K562 (cell line): ENCODE measurements at regions of chr19 and their contacts with region 1.

Region 1: DNA sequence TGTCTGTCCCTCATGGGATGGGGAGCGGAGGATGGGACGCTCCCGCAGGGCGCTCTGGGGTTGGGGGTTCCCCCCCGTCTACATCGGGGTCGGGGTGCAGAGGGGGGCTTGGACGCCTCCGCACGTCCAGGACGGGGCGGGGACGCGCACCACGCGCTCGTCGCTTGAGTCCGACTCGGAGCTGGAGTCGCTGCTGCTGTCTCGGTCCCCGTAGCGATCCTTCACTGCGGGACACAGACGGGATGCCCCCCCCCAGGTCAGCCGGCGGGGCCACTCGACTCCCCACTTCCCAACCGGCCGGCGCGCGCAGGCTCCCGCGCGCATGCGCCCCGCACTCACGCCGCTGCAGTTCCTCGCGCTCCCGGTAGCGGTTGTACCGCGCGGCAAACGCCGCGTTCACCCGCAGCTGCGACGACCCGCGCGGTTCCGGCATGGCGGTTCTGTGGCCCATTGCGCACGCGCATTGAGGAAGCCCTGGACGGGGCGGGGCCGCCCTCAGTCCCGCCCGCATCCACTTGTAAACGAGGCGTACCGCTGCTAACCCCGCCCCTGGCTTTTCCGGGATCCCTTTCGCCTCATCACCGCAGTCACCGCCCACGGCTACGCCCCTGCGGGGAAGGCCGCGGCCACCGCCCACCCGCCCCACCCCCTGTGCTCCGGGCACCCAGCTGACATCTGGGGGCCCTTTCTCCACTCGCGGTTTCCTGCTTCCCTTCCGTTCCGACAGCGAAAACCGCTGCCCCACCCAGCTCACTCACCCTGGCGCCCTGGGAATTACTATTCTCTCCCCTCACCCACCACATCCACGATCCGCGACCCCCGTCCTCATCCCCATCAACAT is at the start of gene KRI1:
- DNase-seq: peak; percentile 95 to 99 (median 98)
- ATAC-seq: peak; percentile 78
- H3K4me3 ChIP-seq: peak within 1 kb of the TSS; percentile 83
- H3K27ac ChIP-seq: peak within 1 kb of the TSS; percentile 90
- H3K4me1 ChIP-seq: peaks cover 29 to 49% of the 10 kb centered on the region in 2 experiments
- H3K27me3 ChIP-seq: no peaks in the 10 kb centered on the region
- CTCF ChIP-seq: peak in 2 of 3 experiments; percentile 53 to 63
- EP300 ChIP-seq: no peak
- POLR2A ChIP-seq: peak; percentile 83
- RAD21 ChIP-seq: no peak
- polyA plus RNA-seq, gene KRI1: 1.1 to 2.0 TPM

Region 2: DNA sequence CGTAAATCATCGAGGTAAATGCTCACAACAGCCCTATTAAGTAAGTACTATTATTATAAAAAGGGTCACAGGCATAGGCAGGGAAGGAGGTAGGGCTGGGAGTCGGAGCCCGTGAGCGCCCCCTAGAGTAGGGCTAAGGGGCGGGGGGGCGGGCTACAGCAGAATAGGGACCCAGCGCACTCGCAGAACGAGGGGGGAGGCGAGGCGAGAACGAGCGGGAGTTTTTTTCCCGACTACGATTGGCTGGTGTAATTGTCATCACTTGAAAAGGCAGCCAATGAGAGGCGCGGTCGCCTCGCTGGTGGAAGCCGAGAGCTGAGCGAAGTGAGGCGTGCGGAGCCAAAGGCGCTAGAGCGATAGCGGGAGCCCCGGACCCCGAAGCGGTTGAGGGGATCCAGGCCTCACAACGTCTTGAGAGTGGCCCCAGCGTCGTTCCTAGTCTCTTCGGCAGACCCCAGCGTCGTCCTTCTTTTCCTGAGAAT is 86.8 kb before region 1 on chr19:
- CTCF ChIA-PET with region 1: no interaction called
- POLR2A ChIA-PET with region 1: no interaction called
- in situ Hi-C with region 1: no loop called
- intact Hi-C with region 1: loop called (anchors 5 kb)
- DNase-seq: peak; percentile 91 to 96 (median 94)
- ATAC-seq: peak; percentile 96
- H3K4me3 ChIP-seq: no peak overlapping the region
- H3K27ac ChIP-seq: no peak overlapping the region
- H3K4me1 ChIP-seq: peaks cover 14 to 26% of the 10 kb centered on the region in 2 experiments; a peak in 4 of 5 replicates
- H3K27me3 ChIP-seq: no peaks in the 10 kb centered on the region
- CTCF ChIP-seq: peak; percentile 61 to 78 (median 62)
- EP300 ChIP-seq: no peak
- POLR2A ChIP-seq: 0 out of 2 replicates have a peak, but pooled peaks have one; percentile 44
- RAD21 ChIP-seq: no peak

Region 3: GRCh38 chr19:10551698-10552301 is 14.0 kb before region 1 on chr19:
- CTCF ChIA-PET with region 1: no interaction called
- POLR2A ChIA-PET with region 1: interaction called, 14 read pairs
- in situ Hi-C with region 1: no loop called
- intact Hi-C with region 1: no loop called
- DNase-seq: no peak
- ATAC-seq: no peak; the same call in 2 of the 3 replicates
- H3K4me3 ChIP-seq: no peak overlapping the region
- H3K27ac ChIP-seq: no peak overlapping the region
- H3K4me1 ChIP-seq: peaks cover 0 to 24% of the 10 kb centered on the region in 2 experiments; a peak in 2 of 5 replicates
- H3K27me3 ChIP-seq: no peaks in the 10 kb centered on the region
- CTCF ChIP-seq: peak in 1 of 3 experiments; percentile 17; a peak in 2 of 6 replicates
- EP300 ChIP-seq: no peak
- POLR2A ChIP-seq: no peak
- RAD21 ChIP-seq: peak in 1 of 2 experiments; percentile 27; a peak in 2 of 4 replicates

Region 4: DNA sequence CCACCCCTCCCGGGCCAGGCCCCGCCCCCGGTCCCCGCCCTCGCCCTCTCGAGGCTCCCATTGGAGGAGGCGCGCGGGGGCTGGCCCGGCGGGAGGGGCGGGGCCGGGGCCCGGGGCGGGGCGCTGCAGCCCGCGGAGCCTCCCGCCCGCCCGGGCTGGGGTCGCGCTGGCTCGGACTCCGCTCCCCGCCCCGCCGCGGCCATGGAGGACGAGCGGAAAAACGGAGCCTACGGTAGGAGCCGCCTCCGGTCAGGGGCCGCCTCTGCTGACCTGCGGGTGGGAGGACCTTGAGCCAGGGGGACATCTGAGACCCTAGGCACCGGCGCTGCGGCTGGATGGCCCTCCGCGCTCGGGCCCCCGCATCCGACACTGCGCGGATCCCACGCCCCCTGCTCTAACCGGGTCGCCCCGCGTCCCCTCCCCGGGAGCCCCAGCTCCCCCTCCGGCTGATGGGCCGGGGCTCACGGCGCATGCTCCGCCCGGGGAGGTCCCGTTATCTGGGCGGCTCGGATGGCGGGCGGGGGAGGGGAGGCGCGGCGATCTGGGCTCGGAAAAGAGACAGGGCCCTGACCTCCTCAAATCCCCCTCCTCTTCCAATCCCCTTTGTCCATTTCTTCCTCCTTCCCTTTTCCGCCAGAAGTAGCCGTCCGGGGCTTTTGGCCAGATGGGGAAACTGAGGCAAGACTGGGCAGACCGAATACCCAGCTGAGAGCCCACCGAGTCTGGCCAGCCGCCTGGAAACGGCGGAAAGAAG is 36.7 kb after region 1 on chr19:
- CTCF ChIA-PET with region 1: no interaction called
- POLR2A ChIA-PET with region 1: no interaction called
- in situ Hi-C with region 1: no loop called
- intact Hi-C with region 1: no loop called
- DNase-seq: peak; percentile 86 to 99 (median 98)
- ATAC-seq: peak; percentile 97
- H3K4me3 ChIP-seq: peak overlapping the region; percentile 98
- H3K27ac ChIP-seq: peak overlapping the region; percentile 91
- H3K4me1 ChIP-seq: peaks cover 24 to 29% of the 10 kb centered on the region in 2 experiments
- H3K27me3 ChIP-seq: peaks cover 4 to 9% of the 10 kb centered on the region in 2 experiments; a peak in 3 of 5 replicates
- CTCF ChIP-seq: no peak
- EP300 ChIP-seq: no peak
- POLR2A ChIP-seq: peak; percentile 72
- RAD21 ChIP-seq: no peak

Region 5: GRCh38 chr19:10653715-10654492 is 88.1 kb after region 1 on chr19 and contains the start of gene ILF3:
- CTCF ChIA-PET with region 1: no interaction called
- POLR2A ChIA-PET with region 1: interaction called, 3 read pairs
- in situ Hi-C with region 1: no loop called
- intact Hi-C with region 1: loop called (anchors 5 kb)
- DNase-seq: peak; percentile 90 to 100 (median 94)
- ATAC-seq: peak; percentile 86
- H3K4me3 ChIP-seq: peak within 1 kb of the TSS; percentile 90
- H3K27ac ChIP-seq: peak within 1 kb of the TSS; percentile 99
- H3K4me1 ChIP-seq: peaks cover 33 to 35% of the 10 kb centered on the region in 2 experiments; a peak in 4 of 5 replicates
- H3K27me3 ChIP-seq: no peaks in the 10 kb centered on the region
- CTCF ChIP-seq: no peak
- EP300 ChIP-seq: peak; percentile 23; the same call in 1 of the 2 replicates
- POLR2A ChIP-seq: peak; percentile 94
- RAD21 ChIP-seq: no peak
- polyA plus RNA-seq, gene ILF3: 26.0 to 27.5 TPM

Region 6: GRCh38 chr19:10685210-10685609 is 119.4 kb after region 1 on chr19:
- CTCF ChIA-PET with region 1: no interaction called
- POLR2A ChIA-PET with region 1: no interaction called
- in situ Hi-C with region 1: no loop called
- intact Hi-C with region 1: no loop called
- DNase-seq: no peak
- ATAC-seq: no peak
- H3K4me3 ChIP-seq: no peak overlapping the region
- H3K27ac ChIP-seq: no peak overlapping the region
- H3K4me1 ChIP-seq: peaks cover 0 to 17% of the 10 kb centered on the region in 2 experiments; a peak in 1 of 5 replicates
- H3K27me3 ChIP-seq: no peaks in the 10 kb centered on the region
- CTCF ChIP-seq: no peak
- EP300 ChIP-seq: no peak
- POLR2A ChIP-seq: no peak
- RAD21 ChIP-seq: no peak

Region 7: GRCh38 chr19:10995926-10996600 is 430.3 kb after region 1 on chr19:
- CTCF ChIA-PET with region 1: no interaction called
- POLR2A ChIA-PET with region 1: no interaction called
- in situ Hi-C with region 1: no loop called
- intact Hi-C with region 1: no loop called
- DNase-seq: no peak
- ATAC-seq: no peak
- H3K4me3 ChIP-seq: no peak overlapping the region
- H3K27ac ChIP-seq: no peak overlapping the region
- H3K4me1 ChIP-seq: peaks cover 0 to 4% of the 10 kb centered on the region in 2 experiments; a peak in 1 of 5 replicates
- H3K27me3 ChIP-seq: no peaks in the 10 kb centered on the region
- CTCF ChIP-seq: no peak
- EP300 ChIP-seq: no peak
- POLR2A ChIP-seq: no peak
- RAD21 ChIP-seq: no peak